Dorsolateral prefrontal cortex (tissue), 120 donors: ENCODE measurements at regions of chr1 and their contacts with region 1.

Region 1: GRCh38 chr1:39408641-39409054 is 82.8 kb upstream of the BMP8A start:
- DNase-seq: peak; percentile 85 to 94 (median 90)
- H3K4me3 ChIP-seq: peak overlapping the region; percentile 50 to 93 (median 79)
- H3K27ac ChIP-seq: peak overlapping the region; percentile 73 to 98 (median 93)
- H3K27me3 ChIP-seq: no peaks in the 10 kb centered on the region
- CTCF ChIP-seq: peak in 24 of 56 donors; percentile 6 to 48 (median 22)

Region 2: GRCh38 chr1:39196244-39197215 is 212.1 kb before region 1 on chr1:
- intact Hi-C with region 1: loop called (anchors 10 kb)
- DNase-seq: no peak
- H3K4me3 ChIP-seq: no peak overlapping the region
- H3K27ac ChIP-seq: peak overlapping the region in 53 of 59 donors; percentile 1 to 95 (median 66)
- H3K27me3 ChIP-seq: no peaks in the 10 kb centered on the region
- CTCF ChIP-seq: no peak

Region 3: DNA sequence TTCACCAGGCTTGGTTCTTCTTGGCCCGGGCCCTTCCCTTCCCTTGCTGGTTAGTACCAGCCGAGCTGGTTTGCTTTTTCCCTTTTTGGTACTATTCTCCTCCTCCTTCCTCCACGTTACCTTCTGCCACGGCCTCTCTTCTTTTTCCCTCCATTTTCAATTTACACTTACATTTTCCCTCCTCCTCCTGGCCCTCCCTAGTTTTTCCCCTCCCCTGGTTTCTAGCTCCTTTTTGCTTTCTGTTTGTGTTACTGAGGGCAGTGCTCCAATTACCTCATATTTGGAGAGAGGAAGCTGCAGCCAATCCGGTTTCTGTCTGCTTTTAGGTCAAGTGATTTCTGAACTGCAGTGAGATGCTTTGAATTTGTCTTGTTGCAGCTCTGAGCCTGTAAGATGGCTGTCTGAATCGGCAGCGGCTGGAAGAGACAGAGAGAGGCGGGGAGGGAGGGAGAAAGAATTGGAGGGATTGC is 140.5 kb before region 1 on chr1:
- intact Hi-C with region 1: loop called (anchors 2 to 5 kb)
- DNase-seq: peak in 8 of 10 donors; percentile 38 to 82 (median 61)
- H3K4me3 ChIP-seq: peak overlapping the region; percentile 32 to 74 (median 58)
- H3K27ac ChIP-seq: peak overlapping the region; percentile 53 to 97 (median 92)
- H3K27me3 ChIP-seq: no peaks in the 10 kb centered on the region
- CTCF ChIP-seq: peak in 2 of 56 donors; percentile 12 to 32

Region 4: DNA sequence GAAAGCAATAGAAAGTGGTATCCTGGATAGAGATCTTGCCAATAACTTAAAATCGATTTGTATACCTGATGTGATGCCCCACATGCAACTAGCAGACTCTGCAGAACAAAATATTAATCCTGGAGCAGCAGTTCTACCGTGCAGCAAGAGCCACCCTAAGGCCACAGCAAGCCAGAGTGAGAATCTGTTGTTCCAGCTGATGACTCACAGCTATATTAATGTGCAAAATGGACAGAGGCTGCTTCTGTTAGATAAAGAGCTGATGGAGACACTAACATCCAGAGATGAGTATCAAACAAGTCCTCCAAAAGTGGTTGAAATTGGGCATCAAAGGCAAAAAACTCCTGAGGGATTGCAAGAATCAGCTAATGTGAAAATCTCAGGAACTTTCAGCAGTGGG is 76.4 kb before region 1 on chr1:
- intact Hi-C with region 1: loop called in 1 of 2 experiments (anchors 10 kb)
- DNase-seq: peak in 2 of 10 donors; percentile 11 to 26
- H3K4me3 ChIP-seq: peak overlapping the region in 2 of 59 donors; percentile 0 to 8
- H3K27ac ChIP-seq: peak overlapping the region in 57 of 59 donors; percentile 8 to 89 (median 72)
- H3K27me3 ChIP-seq: no peaks in the 10 kb centered on the region
- CTCF ChIP-seq: peak in 2 of 56 donors; percentile 9 to 11

Region 5: GRCh38 chr1:39370602-39371001 is 38.0 kb before region 1 on chr1:
- intact Hi-C with region 1: no loop called
- DNase-seq: no peak
- H3K4me3 ChIP-seq: no peak overlapping the region
- H3K27ac ChIP-seq: peak overlapping the region in 14 of 59 donors; percentile 3 to 43 (median 20)
- H3K27me3 ChIP-seq: no peaks in the 10 kb centered on the region
- CTCF ChIP-seq: no peak

Region 6: GRCh38 chr1:39391691-39392679 is 16.7 kb before region 1 on chr1:
- intact Hi-C with region 1: loop called in 1 of 2 experiments (anchors 2 kb)
- DNase-seq: peak in 1 of 10 donors; percentile 33
- H3K4me3 ChIP-seq: peak overlapping the region in 8 of 59 donors; percentile 0 to 40 (median 10)
- H3K27ac ChIP-seq: peak overlapping the region; percentile 20 to 92 (median 79)
- H3K27me3 ChIP-seq: no peaks in the 10 kb centered on the region
- CTCF ChIP-seq: peak in 7 of 56 donors; percentile 9 to 20 (median 14)

Region 7: GRCh38 chr1:39478126-39478915 is 69.7 kb after region 1 on chr1:
- intact Hi-C with region 1: no loop called
- DNase-seq: no peak
- H3K4me3 ChIP-seq: no peak overlapping the region
- H3K27ac ChIP-seq: peak overlapping the region in 1 of 59 donors; percentile 12
- H3K27me3 ChIP-seq: no peaks in the 10 kb centered on the region
- CTCF ChIP-seq: no peak

Region 8: DNA sequence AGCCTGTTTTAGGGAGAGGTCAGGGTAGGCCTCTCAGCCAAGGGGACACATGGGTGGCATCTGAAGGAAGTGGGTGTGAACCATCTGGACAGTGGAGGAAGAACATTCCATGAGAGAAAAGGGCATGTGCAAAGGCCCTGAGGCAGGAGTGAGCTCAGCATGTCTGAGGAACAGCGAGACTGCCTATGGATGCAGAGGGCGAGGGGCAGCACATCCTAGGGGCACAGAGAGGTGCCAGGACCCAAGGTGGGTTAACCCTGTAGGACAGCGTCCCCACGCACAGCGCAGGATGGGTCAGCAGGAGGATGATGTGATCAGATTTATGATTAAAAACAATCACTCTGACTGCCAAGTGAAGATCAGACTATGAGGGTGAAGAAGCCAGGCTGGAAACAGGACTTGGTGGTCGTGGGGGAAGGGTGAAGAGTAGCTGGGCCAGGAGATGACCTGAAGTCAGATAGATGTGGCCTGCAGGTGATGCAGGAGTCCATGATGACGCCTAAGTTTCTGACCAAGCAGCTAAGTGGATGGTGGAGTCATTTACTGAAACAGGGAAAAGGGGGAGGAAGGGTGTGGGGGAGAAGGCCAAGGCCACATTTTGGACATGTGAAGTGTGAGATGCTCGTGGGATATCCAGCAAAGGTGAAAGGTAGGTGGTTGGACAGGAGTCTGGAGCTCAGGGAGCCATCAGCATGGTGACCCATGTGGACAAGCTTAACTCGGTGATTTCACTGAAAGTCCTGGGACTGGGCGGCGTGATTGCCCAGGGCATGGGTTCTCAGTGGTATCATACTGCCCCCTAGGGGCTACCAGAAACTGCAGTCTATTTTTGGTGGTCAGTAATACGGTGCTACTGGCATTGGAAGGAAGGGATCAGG is 130.2 kb after region 1 on chr1:
- intact Hi-C with region 1: loop called in 1 of 2 experiments (anchors 5 kb)
- DNase-seq: peak; percentile 55 to 82 (median 76)
- H3K4me3 ChIP-seq: no peak overlapping the region
- H3K27ac ChIP-seq: peak overlapping the region in 25 of 59 donors; percentile 1 to 94 (median 87)
- H3K27me3 ChIP-seq: no peaks in the 10 kb centered on the region
- CTCF ChIP-seq: peak; percentile 83 to 99 (median 94)